ENCODE measurements at regions of chr9 and their contacts with region 1.

Region 1: DNA sequence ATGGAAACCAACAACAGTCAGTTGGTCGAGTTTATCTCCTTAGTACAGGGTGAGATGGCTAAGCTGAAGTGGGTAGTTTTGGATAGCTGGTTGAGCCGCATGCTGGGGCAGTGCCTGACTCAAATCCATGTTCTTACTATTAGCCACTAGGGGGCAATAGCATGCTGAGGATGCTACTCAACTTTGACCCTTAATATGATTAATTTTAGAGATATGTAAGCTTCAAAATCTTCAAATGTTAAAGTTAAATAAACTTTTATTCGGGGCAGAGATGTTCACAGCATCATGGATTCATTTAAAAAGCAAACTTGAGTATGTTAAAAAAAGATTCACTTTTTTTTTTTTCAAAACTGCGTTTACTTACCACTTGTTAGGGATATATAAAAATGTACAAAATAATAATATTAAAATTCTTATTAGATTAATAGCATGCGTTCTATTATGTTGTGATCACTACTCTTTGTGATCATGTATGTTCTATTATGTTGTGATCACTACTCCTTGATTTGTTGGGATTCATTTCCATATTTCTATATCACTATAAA is 57.0 kb downstream of the C9orf153 start:
- DNase-seq: peak; percentile 61
- ATAC-seq: peak; percentile 97
- H3K4me3 ChIP-seq: no peak overlapping the region
- H3K27ac ChIP-seq: no peak overlapping the region
- H3K4me1 ChIP-seq: no peaks in the 10 kb centered on the region
- H3K27me3 ChIP-seq: peaks cover 7% of the 10 kb centered on the region
- CTCF ChIP-seq: peak; percentile 79
- POLR2A ChIP-seq: no peak
- RAD21 ChIP-seq: peak; percentile 64

Region 2: DNA sequence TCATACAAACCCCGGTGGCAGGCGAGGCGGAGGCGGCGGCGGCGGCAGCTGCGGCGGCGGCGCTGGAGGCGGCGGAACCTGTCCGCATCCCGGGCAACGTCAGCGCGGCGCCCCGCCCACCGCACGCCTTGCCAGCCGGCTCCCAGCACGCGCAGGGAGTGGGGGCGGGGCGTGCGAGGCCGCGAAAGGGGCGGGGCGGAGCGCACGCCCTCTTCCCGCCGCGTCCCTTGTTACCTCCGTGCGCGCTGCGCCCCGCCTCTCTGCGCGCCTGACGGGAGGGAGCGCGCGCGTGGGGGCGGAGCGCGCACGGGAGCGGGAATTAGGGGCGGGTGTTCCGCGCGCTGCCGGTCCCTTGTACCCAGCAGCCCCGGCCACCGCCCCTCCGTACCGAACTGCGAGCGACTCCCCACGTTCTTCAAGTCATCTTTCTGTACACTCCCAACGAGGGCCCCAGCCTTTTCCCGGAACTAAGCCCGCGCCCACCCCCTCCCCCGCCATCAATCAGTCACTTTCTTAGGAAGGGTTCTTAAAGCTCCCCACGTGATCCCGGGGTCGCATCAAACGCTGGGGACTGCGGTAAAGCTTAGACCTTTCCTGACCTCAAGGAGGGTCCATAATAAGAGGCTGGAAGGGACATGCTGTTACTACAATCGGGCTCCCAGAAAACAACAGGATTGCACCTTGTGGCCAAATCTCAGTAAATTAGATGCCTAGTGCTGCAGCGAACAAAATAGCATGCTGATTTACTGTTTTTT is 460.4 kb before region 1 on chr9 and contains the start of gene AGTPBP1:
- CTCF ChIA-PET with region 1: no interaction called
- POLR2A ChIA-PET with region 1: no interaction called
- dilution Hi-C with region 1: no loop called
- in situ Hi-C with region 1: no loop called
- intact Hi-C with region 1: no loop called
- DNase-seq: peak; percentile 87
- ATAC-seq: peak; percentile 95
- H3K4me3 ChIP-seq: peak within 1 kb of the TSS; percentile 92
- H3K27ac ChIP-seq: peak within 1 kb of the TSS; percentile 71
- H3K4me1 ChIP-seq: no peaks in the 10 kb centered on the region
- H3K27me3 ChIP-seq: peaks cover 17% of the 10 kb centered on the region
- CTCF ChIP-seq: no peak
- POLR2A ChIP-seq: no peak
- RAD21 ChIP-seq: no peak
- total RNA-seq, gene AGTPBP1: 9.0 and 14.4 TPM in 2 replicates

Region 3: GRCh38 chr9:86098824-86099700 is 103.3 kb before region 1 on chr9 and contains the start of gene GOLM1:
- CTCF ChIA-PET with region 1: interaction called, 3 read pairs
- POLR2A ChIA-PET with region 1: no interaction called
- dilution Hi-C with region 1: no loop called
- in situ Hi-C with region 1: no loop called
- intact Hi-C with region 1: loop called (anchors 5 kb)
- DNase-seq: peak; percentile 60
- ATAC-seq: peak; percentile 93
- H3K4me3 ChIP-seq: peak within 1 kb of the TSS; percentile 75
- H3K27ac ChIP-seq: peak within 1 kb of the TSS; percentile 30
- H3K4me1 ChIP-seq: peaks cover 4% of the 10 kb centered on the region; the same call in 1 of the 2 replicates
- H3K27me3 ChIP-seq: peaks cover 4% of the 10 kb centered on the region
- CTCF ChIP-seq: no peak
- POLR2A ChIP-seq: no peak
- RAD21 ChIP-seq: no peak
- total RNA-seq, gene GOLM1: 54.8 and 63.9 TPM in 2 replicates

Region 4: GRCh38 chr9:86275962-86276361 is 73.6 kb after region 1 on chr9:
- CTCF ChIA-PET with region 1: interaction called, 5 read pairs
- POLR2A ChIA-PET with region 1: no interaction called
- dilution Hi-C with region 1: no loop called
- in situ Hi-C with region 1: no loop called
- intact Hi-C with region 1: loop called (anchors 5 kb)
- DNase-seq: no peak
- ATAC-seq: peak; percentile 48
- H3K4me3 ChIP-seq: no peak overlapping the region
- H3K27ac ChIP-seq: no peak overlapping the region
- H3K4me1 ChIP-seq: peaks cover 6% of the 10 kb centered on the region
- H3K27me3 ChIP-seq: no peaks in the 10 kb centered on the region
- CTCF ChIP-seq: no peak; the same call in 1 of the 2 replicates
- POLR2A ChIP-seq: no peak
- RAD21 ChIP-seq: peak; percentile 21; the same call in 1 of the 2 replicates

Region 5: DNA sequence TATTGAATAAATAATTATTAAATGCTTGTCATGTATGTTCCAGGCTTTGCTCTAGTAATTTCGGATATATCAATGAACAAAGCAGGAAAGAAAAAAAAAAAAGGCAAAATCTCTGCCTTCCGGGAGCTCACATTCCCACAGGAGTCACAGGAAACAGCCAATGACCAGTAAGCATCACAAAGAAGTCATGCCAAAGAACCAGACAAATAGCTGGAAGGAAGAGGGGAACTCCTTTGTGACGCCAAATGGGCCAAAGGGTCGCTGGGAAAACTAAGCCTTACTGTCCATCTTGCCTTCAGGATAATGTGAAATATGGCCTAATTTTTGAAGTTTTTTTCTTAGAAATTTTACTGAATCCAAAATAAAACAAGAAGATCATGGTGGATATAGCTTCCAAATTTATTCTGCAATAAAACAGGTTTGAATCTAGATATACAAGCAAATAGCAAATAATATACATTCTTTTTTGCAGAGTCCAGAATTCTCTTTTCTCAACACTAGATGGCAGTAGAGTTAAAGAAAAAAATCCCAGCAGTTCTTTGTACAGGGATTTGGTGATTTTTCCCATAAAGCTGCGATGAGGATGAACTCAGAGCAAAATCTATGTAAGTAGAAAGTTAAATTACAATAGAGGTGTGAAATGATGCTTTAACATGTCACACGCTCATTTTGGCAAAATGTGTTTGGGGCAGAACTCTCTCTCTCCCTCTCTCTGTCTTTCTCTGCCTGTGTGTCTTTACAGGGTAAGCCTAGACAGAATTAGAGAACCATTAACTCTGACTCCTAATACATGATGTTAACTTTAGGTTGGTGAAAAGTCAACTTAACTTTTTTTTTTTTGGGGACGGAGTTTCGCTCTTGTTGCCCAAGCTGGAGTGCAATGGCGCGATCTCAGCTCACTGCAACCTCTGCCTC is 211.8 kb after region 1 on chr9:
- CTCF ChIA-PET with region 1: interaction called, 3 read pairs
- POLR2A ChIA-PET with region 1: no interaction called
- dilution Hi-C with region 1: no loop called
- in situ Hi-C with region 1: no loop called
- intact Hi-C with region 1: loop called (anchors 10 kb)
- DNase-seq: peak; percentile 50
- ATAC-seq: peak; percentile 80
- H3K4me3 ChIP-seq: no peak overlapping the region
- H3K27ac ChIP-seq: no peak overlapping the region
- H3K4me1 ChIP-seq: peaks cover 2% of the 10 kb centered on the region
- H3K27me3 ChIP-seq: no peaks in the 10 kb centered on the region
- CTCF ChIP-seq: peak; percentile 70
- POLR2A ChIP-seq: no peak
- RAD21 ChIP-seq: peak; percentile 70

Measured in IMR-90 (cell line).